Tibial artery (tissue), 4 donors: ENCODE measurements at regions of chr5 and their contacts with region 1.

Region 1: GRCh38 chr5:96662725-96663513 is 743 bp downstream of the CAST start:
- DNase-seq: peak; percentile 93 to 98
- H3K4me3 ChIP-seq: peak overlapping the region; percentile 98 to 100
- H3K27ac ChIP-seq: peak overlapping the region; percentile 100
- H3K4me1 ChIP-seq: peaks cover 0 to 38% (median 10%) of the 10 kb centered on the region in 4 donors
- H3K27me3 ChIP-seq: no peaks in the 10 kb centered on the region
- CTCF ChIP-seq: no peak

Region 2: DNA sequence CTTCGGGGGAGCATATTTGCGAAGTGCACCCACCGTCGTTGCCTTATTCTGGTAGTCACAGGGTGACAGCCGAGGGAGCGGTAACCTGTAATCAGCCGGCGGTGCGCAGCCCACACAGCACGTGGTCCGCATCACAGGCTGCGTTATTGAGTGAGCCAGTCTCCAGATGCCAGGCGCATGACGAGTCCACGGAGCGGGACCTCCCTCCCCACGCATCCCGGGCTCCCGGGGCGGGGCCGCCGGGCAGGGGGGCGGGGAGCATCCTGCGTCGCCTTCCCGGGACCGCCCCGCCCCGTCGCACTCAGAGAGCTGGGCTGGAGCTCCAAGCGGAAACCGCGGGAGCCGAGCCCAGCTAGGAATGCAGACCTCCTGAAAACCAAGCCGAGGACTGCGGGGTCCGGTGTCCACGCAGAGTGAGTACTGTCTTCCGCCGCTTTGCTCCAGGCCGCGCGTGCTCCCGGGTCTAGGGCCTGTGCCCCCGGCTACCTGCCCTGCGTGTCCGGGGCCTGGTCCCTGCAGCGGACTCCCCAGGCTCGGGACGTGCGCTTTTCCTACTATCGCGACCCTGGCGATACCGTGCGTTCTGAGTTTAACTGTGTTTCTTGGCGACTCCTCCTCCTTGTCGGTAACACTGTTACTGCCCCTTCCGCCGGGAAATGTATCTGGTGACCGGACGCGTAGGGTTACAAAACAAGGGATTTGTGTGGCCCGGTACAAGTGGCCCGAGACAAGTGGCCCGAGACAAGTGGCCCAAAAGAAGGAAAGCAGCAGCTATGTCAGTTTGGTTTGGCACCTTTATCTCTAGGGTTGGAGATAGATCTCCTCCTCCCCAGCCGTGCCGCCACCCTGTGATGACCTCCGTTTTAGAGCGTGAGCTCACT is 39.8 kb after region 1 on chr5:
- intact Hi-C with region 1: loop called (anchors 2 kb)
- DNase-seq: peak; percentile 96 to 98
- H3K4me3 ChIP-seq: peak overlapping the region; percentile 69 to 70
- H3K27ac ChIP-seq: peak overlapping the region; percentile 87 to 90
- H3K4me1 ChIP-seq: peaks cover 0 to 49% (median 28%) of the 10 kb centered on the region in 4 donors
- H3K27me3 ChIP-seq: no peaks in the 10 kb centered on the region
- CTCF ChIP-seq: no peak

Region 3: GRCh38 chr5:97400537-97400936 is 737.6 kb after region 1 on chr5:
- intact Hi-C with region 1: no loop called
- DNase-seq: no peak
- H3K4me3 ChIP-seq: no peak overlapping the region
- H3K27ac ChIP-seq: no peak overlapping the region
- H3K4me1 ChIP-seq: no peaks in the 10 kb centered on the region
- H3K27me3 ChIP-seq: no peaks in the 10 kb centered on the region
- CTCF ChIP-seq: no peak